Ovary (tissue), 10 donors: ENCODE measurements at regions of chr3 and their contacts with region 1.

Region 1: DNA sequence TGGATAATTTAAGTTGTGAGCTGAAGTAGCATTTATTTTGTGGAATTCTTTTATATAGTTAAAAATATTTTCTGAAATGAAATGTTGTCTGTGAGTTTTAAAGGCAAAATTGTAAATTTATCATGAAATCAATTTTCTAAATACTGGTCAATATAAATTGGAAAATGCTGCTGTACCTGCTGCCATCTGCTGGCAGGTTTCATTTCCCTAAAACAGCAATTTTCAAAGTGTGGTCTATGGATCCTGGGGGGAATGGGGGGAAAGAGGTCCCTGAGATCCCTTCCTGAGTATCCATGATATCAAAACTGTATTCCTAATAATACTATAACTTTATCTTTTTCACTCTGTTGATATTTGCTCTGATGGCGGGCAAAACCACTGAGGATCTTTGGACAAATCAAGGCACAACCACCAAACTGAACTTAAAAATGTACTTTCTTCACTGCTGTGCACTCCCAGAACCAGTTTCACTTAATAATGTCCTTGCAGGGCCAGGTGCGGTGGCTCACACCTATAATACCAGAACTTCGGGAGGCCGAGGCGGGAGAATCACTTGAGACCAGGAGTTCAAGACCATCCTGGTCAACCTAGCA is 17.2 kb upstream of the CCR4 start:
- DNase-seq: peak in 2 of 5 donors; percentile 21 to 22
- H3K4me3 ChIP-seq: no peak overlapping the region
- H3K27ac ChIP-seq: no peak overlapping the region
- H3K4me1 ChIP-seq: no peaks in the 10 kb centered on the region
- H3K27me3 ChIP-seq: no peaks in the 10 kb centered on the region
- CTCF ChIP-seq: peak in 2 of 3 donors; percentile 33 to 52
- EP300 ChIP-seq: no peak
- POLR2A ChIP-seq: no peak

Region 2: GRCh38 chr3:32502118-32502945 is 431.9 kb before region 1 on chr3 and contains the start of gene CMTM6:
- intact Hi-C with region 1: loop called in 1 of 4 experiments (anchors 10 kb)
- DNase-seq: peak; percentile 78 to 86 (median 83)
- H3K4me3 ChIP-seq: peak within 1 kb of the TSS; percentile 79
- H3K27ac ChIP-seq: peak within 1 kb of the TSS; percentile 58 to 83
- H3K4me1 ChIP-seq: no peaks in the 10 kb centered on the region
- H3K27me3 ChIP-seq: no peaks in the 10 kb centered on the region
- CTCF ChIP-seq: no peak
- EP300 ChIP-seq: no peak
- POLR2A ChIP-seq: peak; percentile 62
- total RNA-seq, gene CMTM6: 24.1 to 150 (median 25.9) TPM

Region 3: GRCh38 chr3:32570421-32571191 is 363.6 kb before region 1 on chr3 and contains the start of gene DYNC1LI1:
- intact Hi-C with region 1: no loop called
- DNase-seq: peak; percentile 94 to 98 (median 96)
- H3K4me3 ChIP-seq: peak within 1 kb of the TSS; percentile 71
- H3K27ac ChIP-seq: peak within 1 kb of the TSS; percentile 85 to 87
- H3K4me1 ChIP-seq: peaks cover 7% of the 10 kb centered on the region
- H3K27me3 ChIP-seq: no peaks in the 10 kb centered on the region
- CTCF ChIP-seq: no peak
- EP300 ChIP-seq: no peak
- POLR2A ChIP-seq: peak; percentile 60
- total RNA-seq, gene DYNC1LI1: 21.0 to 37.8 (median 26.6) TPM

Region 4: DNA sequence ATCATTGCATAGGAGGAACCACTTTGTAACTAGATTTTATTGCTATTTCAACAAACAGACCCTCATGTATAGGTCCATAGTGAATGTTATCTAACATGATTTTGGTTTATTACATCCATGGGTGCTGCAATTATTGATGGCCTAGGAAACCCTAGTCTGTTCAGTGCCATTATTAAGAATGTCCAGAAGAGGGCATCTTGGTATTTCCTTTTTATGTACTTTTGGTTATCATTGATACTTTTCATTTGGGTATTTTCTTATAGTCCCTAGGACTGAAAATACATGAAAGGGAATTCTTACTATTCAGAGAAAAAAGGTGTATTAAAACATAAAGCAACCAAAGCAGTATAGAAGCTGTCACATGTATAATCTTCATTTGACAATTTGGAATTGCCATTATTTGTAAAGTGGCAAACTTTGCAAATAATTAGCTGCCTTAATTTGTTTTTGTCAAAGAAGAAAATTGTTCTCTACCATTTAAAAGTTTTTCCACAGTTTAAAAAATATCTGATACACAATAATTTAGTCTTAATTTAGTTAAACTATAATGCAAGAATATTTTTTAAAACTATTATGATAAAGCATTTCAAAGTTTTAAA is 200.5 kb before region 1 on chr3:
- intact Hi-C with region 1: loop called in 1 of 4 experiments (anchors 10 kb)
- DNase-seq: no peak
- H3K4me3 ChIP-seq: no peak overlapping the region
- H3K27ac ChIP-seq: no peak overlapping the region
- H3K4me1 ChIP-seq: no peaks in the 10 kb centered on the region
- H3K27me3 ChIP-seq: no peaks in the 10 kb centered on the region
- CTCF ChIP-seq: peak in 1 of 3 donors; percentile 19
- EP300 ChIP-seq: no peak
- POLR2A ChIP-seq: no peak